Activated CD4-positive, alpha-beta memory T cell treated with anti-CD3 and anti-CD28 coated beads, Interleukin-2, amount 10 ng/mL, durations not matched to agents 7 days and 5 days (primary cell): ENCODE measurements at regions of chr17 and their contacts with region 1.

Region 1: GRCh38 chr17:1399679-1400512 is at the start of gene YWHAE:
- DNase-seq: peak; percentile 97
- H3K4me3 Mint-ChIP-seq: peak within 1 kb of the TSS; percentile 94
- H3K27ac Mint-ChIP-seq: peak within 1 kb of the TSS; percentile 89
- H3K4me1 Mint-ChIP-seq: peaks cover 30% of the 10 kb centered on the region
- H3K27me3 Mint-ChIP-seq: no peaks in the 10 kb centered on the region
- total RNA-seq, gene YWHAE: 352 to 374 TPM

Region 2: GRCh38 chr17:1374431-1375177 is 25.3 kb before region 1 on chr17:
- CTCF ChIA-PET with region 1: no interaction called
- POLR2A ChIA-PET with region 1: interaction called, 17 read pairs
- DNase-seq: no peak
- H3K4me3 Mint-ChIP-seq: no peak overlapping the region
- H3K27ac Mint-ChIP-seq: peak overlapping the region; percentile 83
- H3K4me1 Mint-ChIP-seq: peaks cover 69% of the 10 kb centered on the region
- H3K27me3 Mint-ChIP-seq: no peaks in the 10 kb centered on the region

Region 3: DNA sequence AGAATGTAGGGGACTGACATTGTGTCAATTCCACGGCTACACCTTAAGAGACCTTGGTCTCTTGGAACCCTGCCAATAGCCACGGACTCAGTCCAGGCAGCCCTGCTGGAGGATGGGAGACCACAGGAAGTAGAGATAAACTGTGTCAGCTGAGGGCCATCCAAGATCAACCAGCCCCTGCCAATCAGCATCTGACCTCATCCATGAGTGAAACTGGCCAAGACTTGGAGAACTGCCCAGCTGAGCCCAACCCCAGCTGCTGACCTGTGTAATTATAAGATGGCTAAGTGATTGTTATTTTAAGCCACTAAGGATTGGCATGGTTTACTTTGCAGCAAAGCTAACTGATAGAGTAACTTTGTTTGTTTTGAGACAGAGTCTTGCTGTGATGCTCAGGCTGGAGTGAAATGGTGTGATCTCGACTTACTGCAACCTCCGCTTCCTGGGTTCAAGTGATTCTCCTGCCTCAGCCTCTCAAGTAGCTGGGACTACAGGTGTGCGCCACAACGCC is 13.4 kb after region 1 on chr17:
- CTCF ChIA-PET with region 1: no interaction called
- POLR2A ChIA-PET with region 1: interaction called, 13 read pairs
- DNase-seq: no peak
- H3K4me3 Mint-ChIP-seq: no peak overlapping the region
- H3K27ac Mint-ChIP-seq: no peak overlapping the region
- H3K4me1 Mint-ChIP-seq: peaks cover 2% of the 10 kb centered on the region
- H3K27me3 Mint-ChIP-seq: no peaks in the 10 kb centered on the region

Region 4: GRCh38 chr17:2041561-2042366 is 641.9 kb after region 1 on chr17 and contains the start of gene OVCA2:
- CTCF ChIA-PET with region 1: no interaction called
- POLR2A ChIA-PET with region 1: no interaction called
- DNase-seq: peak; percentile 98
- H3K4me3 Mint-ChIP-seq: peak within 1 kb of the TSS; percentile 97
- H3K27ac Mint-ChIP-seq: peak within 1 kb of the TSS; percentile 92
- H3K4me1 Mint-ChIP-seq: peaks cover 22% of the 10 kb centered on the region
- H3K27me3 Mint-ChIP-seq: no peaks in the 10 kb centered on the region
- total RNA-seq, gene OVCA2: 43.2 to 45.4 TPM